ENCODE measurements at regions of chr17 and their contacts with region 1.

Region 1: DNA sequence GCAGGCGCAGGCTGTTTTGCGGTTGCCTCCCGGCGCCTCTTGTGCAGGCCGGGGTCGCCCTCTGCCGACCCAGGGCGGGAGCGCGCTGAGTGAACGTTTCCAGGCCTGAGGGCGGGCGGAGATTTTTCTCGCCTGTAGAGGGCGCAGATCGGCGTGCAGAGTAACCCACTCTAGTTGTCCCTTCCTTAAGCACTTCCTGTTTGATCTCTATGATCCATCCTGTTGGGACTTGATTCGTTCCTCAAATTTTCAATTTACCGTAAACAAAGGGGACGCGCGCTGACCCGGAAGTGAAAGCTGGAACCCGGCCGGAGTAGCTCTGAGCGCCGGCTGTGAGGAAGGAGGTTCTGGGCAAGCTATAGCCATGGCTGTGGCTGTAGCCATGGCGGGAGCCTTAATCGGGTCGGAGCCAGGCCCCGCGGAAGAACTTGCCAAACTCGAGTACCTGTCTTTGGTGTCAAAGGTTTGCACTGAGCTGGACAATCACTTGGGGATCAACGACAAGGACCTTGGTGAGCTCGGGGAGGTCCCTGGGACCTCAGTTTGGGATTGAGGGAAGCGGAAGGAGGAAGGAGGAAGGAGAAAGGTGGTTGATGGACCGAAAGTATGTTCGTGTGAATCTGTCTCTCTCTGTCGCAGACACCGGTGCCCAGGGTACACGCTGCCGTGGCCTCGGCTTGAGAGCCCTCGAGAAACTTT is at the start of gene DHX8:
- DNase-seq: peak; percentile 97 to 98
- ATAC-seq: peak; percentile 99 to 100 (median 99)
- H3K4me3 ChIP-seq: peak within 1 kb of the TSS; percentile 55 to 85 (median 73)
- H3K27ac ChIP-seq: peak within 1 kb of the TSS; percentile 12 to 94 (median 82)
- H3K4me1 ChIP-seq: peaks cover 18 to 39% (median 33%) of the 10 kb centered on the region in 9 donors
- H3K27me3 ChIP-seq: no peaks in the 10 kb centered on the region
- CTCF ChIP-seq: peak in 8 of 9 donors; percentile 100
- total RNA-seq, gene DHX8: 22.4 to 42.0 (median 29.0) TPM

Region 2: DNA sequence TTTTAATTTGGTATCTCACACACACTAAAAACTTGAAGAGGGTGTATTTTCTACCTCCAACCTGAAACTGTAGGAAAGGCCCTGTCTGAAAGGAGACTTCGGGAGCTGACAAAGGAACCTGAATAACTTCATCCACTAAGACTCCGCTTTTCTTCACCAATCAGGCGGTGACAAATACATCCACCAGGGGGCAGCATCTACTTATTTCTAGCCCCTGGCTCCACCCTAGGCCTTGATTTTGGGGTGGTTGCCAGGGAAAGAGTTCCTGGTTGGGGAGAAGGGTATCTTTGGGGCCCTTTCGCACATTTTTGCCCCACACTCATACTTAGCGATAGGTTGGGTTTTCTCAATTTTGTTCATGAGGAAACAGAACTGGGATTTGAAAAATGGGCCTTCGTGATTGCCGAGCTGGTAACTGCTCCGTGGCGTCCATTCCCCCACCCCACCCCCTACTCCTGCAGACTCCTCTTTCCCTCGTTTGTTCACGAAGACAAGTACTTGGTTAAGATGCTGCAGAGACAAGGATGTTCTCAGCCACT is 89.8 kb before region 1 on chr17:
- intact Hi-C with region 1: loop called (anchors 1 to 2 kb)
- DNase-seq: peak; percentile 76 to 95
- ATAC-seq: peak; percentile 39 to 72 (median 61)
- H3K4me3 ChIP-seq: peak overlapping the region in 5 of 10 donors; percentile 7 to 36 (median 31)
- H3K27ac ChIP-seq: peak overlapping the region in 8 of 10 donors; percentile 15 to 73 (median 56)
- H3K4me1 ChIP-seq: peaks cover 0 to 38% (median 17%) of the 10 kb centered on the region in 9 donors
- H3K27me3 ChIP-seq: no peaks in the 10 kb centered on the region
- CTCF ChIP-seq: peak; percentile 91 to 98 (median 96)

Region 3: DNA sequence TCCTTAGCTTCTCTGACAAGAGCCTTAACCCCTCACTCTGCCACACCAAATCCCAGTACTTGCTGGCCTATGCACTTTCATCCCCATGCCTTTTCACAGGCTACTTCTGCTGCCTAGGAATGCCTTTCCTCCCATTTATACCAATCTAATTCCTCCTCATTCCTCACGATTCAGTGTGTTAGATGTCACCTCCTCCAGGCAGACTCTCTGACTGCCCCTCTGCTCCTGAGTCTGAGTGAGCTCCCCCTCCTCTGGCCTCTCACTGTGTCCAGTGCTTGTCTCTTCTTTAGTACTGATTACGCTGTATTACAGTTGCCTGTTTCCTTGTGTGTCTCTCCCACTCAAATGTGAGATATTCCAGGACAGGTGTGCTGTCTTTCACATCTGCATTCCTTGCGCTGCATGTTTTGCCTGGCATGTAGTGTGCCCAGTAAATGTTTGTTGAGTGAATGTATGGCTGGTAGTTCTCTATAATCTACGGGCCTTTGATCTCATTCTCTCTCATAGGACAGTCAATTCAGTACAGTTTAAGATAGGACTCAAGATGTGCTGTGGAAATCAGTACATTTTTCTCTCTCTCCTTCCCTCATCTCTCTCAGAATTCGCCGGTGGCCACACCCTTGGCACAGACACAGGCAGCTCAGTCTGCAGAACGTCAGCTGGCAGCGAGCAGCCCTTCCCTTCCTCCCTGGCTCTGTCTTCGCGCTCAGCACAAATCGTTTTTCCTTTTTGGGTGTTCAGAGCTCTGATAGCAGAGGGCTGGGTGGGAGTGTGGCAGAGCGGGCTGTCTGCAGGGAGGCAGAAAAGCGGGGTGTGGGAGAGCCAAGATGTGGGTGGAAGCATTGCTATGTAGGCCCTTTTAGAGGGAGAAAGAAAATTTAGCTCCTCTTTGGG is 66.6 kb before region 1 on chr17:
- intact Hi-C with region 1: no loop called
- DNase-seq: peak; percentile 61 to 71
- ATAC-seq: peak; percentile 71 to 90 (median 86)
- H3K4me3 ChIP-seq: no peak overlapping the region
- H3K27ac ChIP-seq: peak overlapping the region in 9 of 10 donors; percentile 15 to 73 (median 61)
- H3K4me1 ChIP-seq: peaks cover 9 to 29% (median 24%) of the 10 kb centered on the region in 9 donors
- H3K27me3 ChIP-seq: no peaks in the 10 kb centered on the region
- CTCF ChIP-seq: no peak

Region 4: DNA sequence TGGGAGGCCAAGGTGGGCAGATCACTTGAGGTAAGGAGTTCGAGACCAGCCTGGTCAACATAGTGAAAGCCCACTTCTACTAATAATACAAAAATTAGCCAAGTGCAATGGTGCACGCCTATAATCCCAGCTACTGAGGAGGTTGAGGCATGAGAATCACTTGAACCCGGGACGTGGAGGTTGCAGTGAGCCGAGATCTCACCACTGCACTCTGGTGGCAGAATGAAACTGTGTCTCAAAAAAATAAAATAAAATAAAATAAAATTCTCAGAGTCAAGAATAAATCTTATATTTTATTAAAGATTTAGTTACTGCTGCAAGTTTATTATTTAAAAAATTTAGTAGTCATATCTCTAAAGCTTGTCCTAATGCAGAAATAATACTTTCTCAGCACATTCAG is 55.3 kb before region 1 on chr17:
- intact Hi-C with region 1: no loop called
- DNase-seq: no peak
- ATAC-seq: no peak
- H3K4me3 ChIP-seq: no peak overlapping the region
- H3K27ac ChIP-seq: no peak overlapping the region
- H3K4me1 ChIP-seq: peaks cover 2 to 20% (median 11%) of the 10 kb centered on the region in 9 donors
- H3K27me3 ChIP-seq: peaks cover 0 to 36% (median 8%) of the 10 kb centered on the region in 7 donors
- CTCF ChIP-seq: peak in 4 of 9 donors; percentile 16 to 31 (median 22)

Measured in heart right ventricle (tissue), 16 donors.